OCI-LY7 (cell line): ENCODE measurements at regions of chr1 and their contacts with region 1.

Region 1: GRCh38 chr1:7752512-7753417 is 18.3 kb upstream of the VAMP3 start:
- DNase-seq: peak; percentile 48
- H3K4me3 ChIP-seq: no peak overlapping the region
- H3K27ac ChIP-seq: no peak overlapping the region
- H3K4me1 ChIP-seq: no peaks in the 10 kb centered on the region
- CTCF ChIP-seq: peak; percentile 93

Region 2: GRCh38 chr1:7667625-7668218 is 85.0 kb before region 1 on chr1:
- CTCF ChIA-PET with region 1: interaction called, 33 read pairs
- POLR2A ChIA-PET with region 1: interaction called, 3 read pairs
- intact Hi-C with region 1: loop called (anchors 1 kb)
- DNase-seq: peak; percentile 64
- H3K4me3 ChIP-seq: no peak overlapping the region
- H3K27ac ChIP-seq: no peak overlapping the region
- H3K4me1 ChIP-seq: no peaks in the 10 kb centered on the region
- CTCF ChIP-seq: peak; percentile 91

Region 3: DNA sequence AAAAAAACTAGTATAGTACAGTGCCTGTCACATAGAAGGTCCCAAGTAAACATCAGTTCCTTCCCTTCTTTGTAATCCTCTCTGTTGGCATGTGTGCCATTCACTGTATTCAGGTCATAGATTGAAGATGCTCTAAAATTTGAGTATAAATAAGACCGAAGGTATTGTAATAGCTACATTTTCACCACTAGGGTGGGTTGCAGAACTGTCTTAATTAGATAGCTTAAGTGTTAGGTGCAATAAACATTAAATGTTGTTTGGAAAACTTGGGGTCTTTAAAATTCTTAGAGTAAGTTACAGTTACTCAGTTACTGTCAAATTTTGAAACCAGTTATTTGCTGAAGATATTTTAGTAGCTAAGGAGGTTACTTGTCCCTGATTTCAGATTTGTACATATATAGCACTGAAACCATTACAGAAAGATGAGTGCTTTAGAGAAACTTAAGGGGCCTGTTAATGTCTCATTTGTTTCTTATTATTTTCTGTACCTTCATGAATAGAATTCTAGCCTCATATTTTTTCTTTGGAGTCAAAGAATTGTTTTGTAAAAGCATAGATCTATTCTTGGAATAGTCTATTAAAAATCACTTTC is 55.6 kb after region 1 on chr1:
- CTCF ChIA-PET with region 1: no interaction called
- POLR2A ChIA-PET with region 1: no interaction called
- intact Hi-C with region 1: no loop called
- DNase-seq: peak; percentile 44
- H3K4me3 ChIP-seq: no peak overlapping the region
- H3K27ac ChIP-seq: no peak overlapping the region
- H3K4me1 ChIP-seq: no peaks in the 10 kb centered on the region
- CTCF ChIP-seq: peak; percentile 82